Transverse colon (tissue), 4 donors: ENCODE measurements at regions of chr10 and their contacts with region 1.

Region 1: GRCh38 chr10:128530301-128530700 is 404.1 kb upstream of the MKI67 start:
- DNase-seq: no peak
- H3K4me3 ChIP-seq: no peak overlapping the region
- H3K27ac ChIP-seq: no peak overlapping the region
- H3K4me1 ChIP-seq: no peaks in the 10 kb centered on the region
- H3K27me3 ChIP-seq: peaks cover 15% of the 10 kb centered on the region
- CTCF ChIP-seq: peak in 4 of 5 experiments; percentile 35 to 56 (median 46)
- EP300 ChIP-seq: no peak
- POLR2A ChIP-seq: no peak

Region 2: GRCh38 chr10:127150136-127150535 is 1380.2 kb before region 1 on chr10:
- in situ Hi-C with region 1: no loop called
- intact Hi-C with region 1: loop called (anchors 10 kb)
- DNase-seq: no peak
- H3K4me3 ChIP-seq: no peak overlapping the region
- H3K27ac ChIP-seq: no peak overlapping the region
- H3K4me1 ChIP-seq: no peaks in the 10 kb centered on the region
- H3K27me3 ChIP-seq: no peaks in the 10 kb centered on the region
- CTCF ChIP-seq: no peak
- EP300 ChIP-seq: no peak
- POLR2A ChIP-seq: no peak

Region 3: DNA sequence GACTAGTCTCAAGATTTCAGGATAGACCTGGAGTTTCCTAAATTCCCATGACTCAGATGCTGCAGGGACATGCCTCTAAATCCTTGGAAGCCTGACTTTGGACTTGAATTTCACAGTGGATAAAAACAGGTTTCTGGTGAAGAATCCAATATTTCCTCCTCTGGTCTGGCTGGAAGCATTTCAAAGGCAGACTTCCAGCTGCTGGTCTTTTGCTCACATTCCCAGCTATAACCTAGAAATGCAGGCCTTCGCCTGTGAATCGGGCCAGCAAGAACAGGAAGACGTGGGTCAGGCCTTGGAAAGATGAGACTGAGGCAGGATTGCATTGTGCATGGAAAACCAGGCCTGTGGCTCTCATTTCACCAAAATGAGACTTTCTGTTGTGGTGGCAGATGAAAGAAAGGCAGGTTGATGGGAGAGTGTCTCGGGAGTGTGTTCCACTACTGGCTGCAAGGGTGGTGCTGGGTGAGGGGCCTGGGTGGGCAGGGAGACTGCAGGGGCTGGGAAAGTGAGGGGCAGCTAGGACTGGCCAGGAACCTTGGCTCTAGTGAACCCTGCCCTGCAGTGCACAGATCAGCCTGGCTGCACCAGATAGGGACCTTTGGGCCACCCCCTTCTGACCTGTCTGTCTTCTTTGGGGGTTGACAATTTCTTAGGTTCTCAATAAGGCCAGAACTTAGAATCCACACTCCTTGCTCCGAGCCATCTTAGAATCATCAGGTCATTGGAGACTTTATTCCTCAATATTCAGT is 84.7 kb after region 1 on chr10:
- in situ Hi-C with region 1: no loop called
- intact Hi-C with region 1: no loop called
- DNase-seq: no peak
- H3K4me3 ChIP-seq: no peak overlapping the region
- H3K27ac ChIP-seq: no peak overlapping the region
- H3K4me1 ChIP-seq: no peaks in the 10 kb centered on the region
- H3K27me3 ChIP-seq: no peaks in the 10 kb centered on the region
- CTCF ChIP-seq: no peak
- EP300 ChIP-seq: no peak
- POLR2A ChIP-seq: no peak

Region 4: GRCh38 chr10:129253551-129254179 is 723.4 kb after region 1 on chr10:
- in situ Hi-C with region 1: no loop called
- intact Hi-C with region 1: no loop called
- DNase-seq: no peak
- H3K4me3 ChIP-seq: no peak overlapping the region
- H3K27ac ChIP-seq: no peak overlapping the region
- H3K4me1 ChIP-seq: no peaks in the 10 kb centered on the region
- H3K27me3 ChIP-seq: no peaks in the 10 kb centered on the region
- CTCF ChIP-seq: no peak
- EP300 ChIP-seq: no peak
- POLR2A ChIP-seq: no peak